AG04450 (cell line): ENCODE measurements at regions of chr19 and their contacts with region 1.

Region 1: GRCh38 chr19:42423462-42424344 is 3.5 kb downstream of the LIPE start:
- DNase-seq: peak; percentile 85
- H3K4me3 ChIP-seq: peak overlapping the region; percentile 74
- H3K27ac ChIP-seq: peak overlapping the region; percentile 61
- H3K27me3 ChIP-seq: peaks cover 4% of the 10 kb centered on the region
- CTCF ChIP-seq: no peak

Region 2: DNA sequence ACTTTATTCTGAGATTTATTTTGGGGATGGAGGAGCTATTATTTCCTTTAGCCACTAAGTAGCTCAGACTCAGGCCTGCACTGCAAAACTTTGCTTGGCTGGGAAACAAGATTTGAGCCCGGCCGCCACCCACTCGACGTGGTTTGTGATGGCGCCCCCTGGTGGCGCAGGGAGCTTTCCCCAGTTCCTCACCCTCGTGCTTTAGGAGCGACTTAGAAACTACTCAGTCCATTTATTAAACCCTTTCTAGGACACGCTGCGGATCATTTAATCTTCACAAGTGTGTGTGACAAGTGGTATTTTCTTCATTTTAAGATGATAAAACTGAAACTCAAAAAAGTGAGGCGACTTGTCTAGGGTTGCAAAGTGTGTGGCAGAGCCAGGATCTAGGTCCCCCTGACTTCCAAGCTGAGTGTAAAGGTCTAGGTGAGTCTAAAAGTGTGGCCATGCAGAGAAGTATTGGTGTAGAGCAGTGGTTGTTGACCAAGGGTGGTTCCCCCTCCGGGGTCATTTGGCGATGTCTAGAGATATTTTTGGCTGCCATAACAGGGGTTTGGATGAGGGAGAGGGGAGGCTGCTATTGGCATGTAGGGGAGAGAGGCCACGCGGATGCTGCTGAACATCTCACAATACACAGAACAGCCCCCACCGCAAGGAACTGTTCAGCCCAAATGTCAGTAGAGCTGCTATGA is 16.8 kb after region 1 on chr19:
- CTCF ChIA-PET with region 1: interaction called, 23 read pairs
- POLR2A ChIA-PET with region 1: interaction called, 3 read pairs
- DNase-seq: peak; percentile 26
- H3K4me3 ChIP-seq: no peak overlapping the region
- H3K27ac ChIP-seq: no peak overlapping the region
- H3K27me3 ChIP-seq: peaks cover 29% of the 10 kb centered on the region
- CTCF ChIP-seq: peak; percentile 86